Panc1 (cell line): ENCODE measurements at regions of chr17 and their contacts with region 1.

Region 1: GRCh38 chr17:38509008-38509771 is 80.9 kb downstream of the ARHGAP23 start:
- DNase-seq: peak; percentile 62
- ATAC-seq: peak; percentile 74
- H3K4me3 ChIP-seq: peak overlapping the region; percentile 40 to 57
- H3K27ac ChIP-seq: peak overlapping the region; percentile 60; the same call in 1 of the 2 replicates
- H3K4me1 ChIP-seq: peaks cover 12% of the 10 kb centered on the region
- H3K27me3 ChIP-seq: no peaks in the 10 kb centered on the region
- CTCF ChIP-seq: peak; percentile 81

Region 2: GRCh38 chr17:38532451-38532850 is 23.3 kb after region 1 on chr17:
- CTCF ChIA-PET with region 1: interaction called, 3 read pairs
- POLR2A ChIA-PET with region 1: interaction called, 12 read pairs
- in situ Hi-C with region 1: no loop called
- intact Hi-C with region 1: no loop called
- DNase-seq: no peak
- ATAC-seq: no peak
- H3K4me3 ChIP-seq: no peak overlapping the region
- H3K27ac ChIP-seq: no peak overlapping the region
- H3K4me1 ChIP-seq: no peaks in the 10 kb centered on the region
- H3K27me3 ChIP-seq: no peaks in the 10 kb centered on the region
- CTCF ChIP-seq: no peak